Calu3 (cell line): ENCODE measurements at regions of chr7 and their contacts with region 1.

Region 1: DNA sequence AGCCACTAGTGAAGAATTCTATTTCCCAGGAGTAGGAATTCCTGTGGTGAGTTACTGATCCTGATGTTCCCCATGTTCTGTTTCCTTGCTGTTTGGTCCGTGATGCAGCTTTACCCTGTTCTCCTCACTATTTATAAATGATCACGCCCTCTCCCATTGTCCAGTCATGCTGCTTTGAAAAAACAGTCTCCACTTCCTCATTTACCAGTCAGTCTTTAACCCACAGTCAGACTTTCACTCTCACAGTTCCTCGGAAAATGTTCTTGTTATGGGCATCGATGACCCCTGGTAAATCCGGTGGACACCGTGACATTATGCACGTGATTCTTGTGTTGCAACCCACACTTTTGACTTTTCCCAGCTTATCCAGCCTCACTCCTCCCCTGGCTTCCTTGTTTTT is 14.4 kb downstream of the SCIN start:
- DNase-seq: peak; percentile 65
- H3K4me3 Mint-ChIP-seq: peak overlapping the region; percentile 46
- H3K27ac Mint-ChIP-seq: peak overlapping the region; percentile 96
- H3K4me1 Mint-ChIP-seq: peaks cover 36% of the 10 kb centered on the region
- H3K27me3 Mint-ChIP-seq: no peaks in the 10 kb centered on the region
- CTCF ChIP-seq: no peak

Region 2: DNA sequence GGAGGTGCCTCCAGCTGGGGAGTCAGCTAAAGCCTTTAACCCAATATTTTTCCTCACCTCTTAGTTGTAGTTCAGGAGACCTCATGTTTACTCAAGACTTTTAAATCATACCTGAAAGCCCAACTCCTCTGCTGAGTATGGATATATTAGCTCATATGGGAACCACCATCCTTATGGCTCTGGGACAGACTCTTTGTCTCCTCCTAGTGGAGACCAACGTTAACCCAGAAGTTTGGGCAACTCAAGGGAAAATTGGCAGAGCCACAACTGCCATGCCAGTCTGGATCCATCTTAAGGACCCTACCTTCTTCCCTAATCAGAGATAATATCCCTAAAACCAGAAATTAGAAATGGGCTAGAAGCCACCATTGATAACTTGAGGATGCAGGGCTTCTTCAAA is 293.1 kb before region 1 on chr7:
- CTCF ChIA-PET with region 1: no interaction called
- intact Hi-C with region 1: no loop called
- DNase-seq: no peak
- H3K4me3 Mint-ChIP-seq: no peak overlapping the region
- H3K27ac Mint-ChIP-seq: no peak overlapping the region
- H3K4me1 Mint-ChIP-seq: peaks cover 12% of the 10 kb centered on the region
- H3K27me3 Mint-ChIP-seq: no peaks in the 10 kb centered on the region
- CTCF ChIP-seq: peak; percentile 33

Region 3: DNA sequence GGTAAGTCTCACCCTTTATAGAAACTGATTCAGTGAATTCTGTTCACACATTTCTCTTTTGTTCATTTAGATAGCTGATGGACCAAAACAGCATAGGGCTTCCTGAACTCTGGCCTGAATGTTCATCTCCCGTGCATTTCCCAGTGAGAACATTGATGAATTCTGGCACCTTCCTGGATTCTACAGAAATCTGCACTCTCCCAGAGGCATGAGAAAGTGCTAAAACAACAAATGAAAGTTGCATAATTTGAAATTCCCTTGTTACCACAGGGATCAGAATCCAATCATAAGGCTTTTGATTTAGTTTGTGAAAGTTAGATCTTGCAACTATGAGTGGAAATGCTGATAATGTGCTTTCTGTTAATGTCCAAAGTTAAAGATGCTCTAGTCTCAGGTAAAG is 44.1 kb before region 1 on chr7:
- CTCF ChIA-PET with region 1: no interaction called
- intact Hi-C with region 1: loop called (anchors 5 kb)
- DNase-seq: no peak
- H3K4me3 Mint-ChIP-seq: no peak overlapping the region
- H3K27ac Mint-ChIP-seq: no peak overlapping the region
- H3K4me1 Mint-ChIP-seq: peaks cover 13% of the 10 kb centered on the region
- H3K27me3 Mint-ChIP-seq: no peaks in the 10 kb centered on the region
- CTCF ChIP-seq: no peak

Region 4: DNA sequence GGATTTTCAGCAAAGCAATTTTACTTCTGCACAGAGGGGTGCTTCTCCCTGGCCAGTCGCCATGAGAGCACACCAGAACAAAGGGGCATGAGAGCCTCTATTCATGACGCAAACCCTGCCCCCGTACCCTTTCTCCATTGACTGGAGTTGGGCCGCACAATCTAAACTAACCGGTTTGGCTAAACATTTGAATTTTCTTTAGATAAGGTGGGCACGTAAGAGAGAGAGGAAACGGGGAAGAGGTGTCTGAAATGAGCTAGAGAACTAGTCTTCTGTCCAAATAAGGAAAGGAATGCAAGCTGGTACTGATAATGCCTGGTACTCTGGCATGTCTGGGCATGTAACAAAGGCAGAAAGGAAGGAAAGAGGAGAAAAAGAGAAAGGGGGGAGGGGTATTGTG is 27.6 kb before region 1 on chr7:
- CTCF ChIA-PET with region 1: interaction called, 7 read pairs
- intact Hi-C with region 1: loop called (anchors 1 kb)
- DNase-seq: peak; percentile 81
- H3K4me3 Mint-ChIP-seq: peak overlapping the region; percentile 15
- H3K27ac Mint-ChIP-seq: peak overlapping the region; percentile 80
- H3K4me1 Mint-ChIP-seq: peaks cover 33% of the 10 kb centered on the region
- H3K27me3 Mint-ChIP-seq: no peaks in the 10 kb centered on the region
- CTCF ChIP-seq: no peak

Region 5: GRCh38 chr7:12607134-12607533 is 22.2 kb after region 1 on chr7:
- CTCF ChIA-PET with region 1: interaction called, 5 read pairs
- intact Hi-C with region 1: loop called (anchors 1 kb)
- DNase-seq: no peak
- H3K4me3 Mint-ChIP-seq: no peak overlapping the region
- H3K27ac Mint-ChIP-seq: no peak overlapping the region
- H3K4me1 Mint-ChIP-seq: no peaks in the 10 kb centered on the region
- H3K27me3 Mint-ChIP-seq: no peaks in the 10 kb centered on the region
- CTCF ChIP-seq: no peak

Region 6: GRCh38 chr7:13132314-13132713 is 547.4 kb after region 1 on chr7:
- CTCF ChIA-PET with region 1: no interaction called
- intact Hi-C with region 1: no loop called
- DNase-seq: no peak
- H3K4me3 Mint-ChIP-seq: no peak overlapping the region
- H3K27ac Mint-ChIP-seq: no peak overlapping the region
- H3K4me1 Mint-ChIP-seq: no peaks in the 10 kb centered on the region
- H3K27me3 Mint-ChIP-seq: no peaks in the 10 kb centered on the region
- CTCF ChIP-seq: no peak